AG04449 (cell line): ENCODE measurements at regions of chr2 and their contacts with region 1.

Region 1: GRCh38 chr2:111667542-111668273 is 216.3 kb downstream of the ANAPC1 start:
- DNase-seq: no peak
- H3K4me3 ChIP-seq: no peak overlapping the region
- CTCF ChIP-seq: peak; percentile 72

Region 2: GRCh38 chr2:111116843-111117597 is 550.7 kb before region 1 on chr2:
- CTCF ChIA-PET with region 1: interaction called, 18 read pairs
- POLR2A ChIA-PET with region 1: no interaction called
- DNase-seq: no peak
- H3K4me3 ChIP-seq: peak overlapping the region; percentile 57
- CTCF ChIP-seq: peak; percentile 98

Region 3: DNA sequence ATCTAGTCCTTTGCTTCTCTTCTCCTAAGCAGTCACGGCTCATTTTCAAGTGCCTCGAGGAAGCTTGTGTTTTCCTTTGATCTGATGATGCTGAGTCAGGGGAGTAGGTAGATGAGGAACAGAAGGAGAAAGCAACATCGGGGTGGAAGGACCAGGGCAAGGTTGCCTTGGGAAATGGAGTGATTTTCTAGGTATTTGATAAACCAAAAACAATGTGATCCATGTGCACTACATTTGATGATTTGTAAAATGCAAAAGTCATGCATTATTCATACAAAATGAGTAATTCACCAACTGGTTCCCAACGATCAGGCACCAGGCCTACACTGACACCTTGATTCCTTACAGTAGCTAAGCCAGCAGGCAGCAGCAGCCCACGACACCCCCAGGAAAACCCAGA is 10.9 kb after region 1 on chr2:
- CTCF ChIA-PET with region 1: interaction called, 23 read pairs
- POLR2A ChIA-PET with region 1: no interaction called
- DNase-seq: no peak
- H3K4me3 ChIP-seq: no peak overlapping the region
- CTCF ChIP-seq: no peak

Region 4: DNA sequence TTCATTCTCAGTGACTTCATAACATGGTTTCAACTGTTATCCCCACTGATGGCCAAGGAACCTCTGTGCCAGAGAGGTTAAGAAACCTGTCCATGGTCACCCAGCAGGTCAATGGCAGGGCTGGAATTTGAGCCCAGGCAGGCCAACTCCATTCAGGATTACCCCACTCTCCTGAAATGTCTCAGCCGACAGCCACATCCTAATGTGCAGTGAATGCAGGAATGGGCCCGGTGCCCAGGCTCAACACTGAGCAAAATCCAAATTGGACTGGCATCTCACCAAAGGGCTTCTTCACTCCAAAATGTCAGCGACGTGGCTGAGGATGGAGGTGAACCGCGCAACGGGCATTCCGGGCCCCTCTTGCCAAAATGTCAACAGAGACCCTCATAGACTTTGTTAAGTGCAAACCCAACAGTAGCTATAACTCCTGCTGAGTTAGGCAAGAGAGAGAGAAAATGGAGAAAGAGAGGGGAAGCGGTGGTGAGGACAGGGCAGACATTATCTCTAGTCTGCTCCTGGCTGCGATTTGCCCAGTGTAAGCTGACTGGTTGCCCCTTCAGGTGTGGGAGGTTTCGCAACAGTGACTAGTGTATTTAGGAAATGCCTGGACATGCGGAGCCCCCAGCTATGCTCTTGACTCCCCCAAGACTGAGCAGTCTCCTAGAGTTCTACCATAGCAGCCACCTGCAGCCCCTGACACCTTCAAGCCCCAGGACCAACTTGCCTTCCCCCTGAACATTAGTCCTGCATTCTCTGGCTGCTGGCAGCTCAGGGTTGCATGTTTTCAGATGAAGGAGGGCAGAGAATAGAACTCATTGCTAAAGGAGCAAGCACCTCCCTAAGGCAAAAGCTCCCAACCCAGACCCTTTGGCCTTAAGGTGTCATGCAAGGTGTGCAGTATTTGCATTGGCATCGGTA is 48.5 kb after region 1 on chr2:
- CTCF ChIA-PET with region 1: no interaction called
- POLR2A ChIA-PET with region 1: no interaction called
- DNase-seq: no peak
- H3K4me3 ChIP-seq: no peak overlapping the region
- CTCF ChIP-seq: no peak